ENCODE measurements at regions of chr1 and their contacts with region 1.

Region 1: DNA sequence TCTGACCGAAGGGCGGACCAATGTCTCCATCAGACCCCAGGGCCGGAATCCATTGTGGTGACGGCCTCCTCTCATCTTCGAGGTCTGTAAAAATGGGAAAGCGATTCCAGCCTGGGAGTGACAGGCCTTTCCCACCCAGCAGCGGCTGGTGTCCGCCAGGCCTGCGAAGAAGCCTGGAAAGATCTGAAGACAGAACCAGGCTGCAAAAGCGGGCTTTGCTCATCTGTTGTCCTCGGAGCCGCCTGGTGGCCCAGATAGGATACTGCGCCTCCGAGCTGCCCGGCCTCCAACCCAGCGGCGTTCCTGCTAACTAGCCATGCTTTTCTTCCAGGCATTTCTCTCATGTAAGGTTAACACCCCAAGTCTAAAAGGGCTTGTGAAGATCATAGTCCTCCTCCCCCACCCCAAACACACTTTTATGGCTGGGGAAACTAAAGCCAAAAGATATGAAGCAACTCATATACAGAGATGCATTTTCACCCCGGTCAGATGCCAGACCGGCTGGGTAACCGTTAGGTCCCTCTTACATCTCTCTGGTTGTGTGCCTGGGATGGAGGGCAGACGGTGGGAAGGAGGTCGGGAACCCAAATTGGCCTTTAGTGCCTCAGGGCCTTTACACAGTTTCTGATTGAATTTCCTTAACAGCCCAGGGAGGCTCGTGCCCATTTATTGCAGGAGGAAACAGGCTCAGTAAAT is 1.9 kb upstream of the DHRS3 start:
- DNase-seq: peak; percentile 70
- ATAC-seq: peak; percentile 36
- H3K4me3 ChIP-seq: peak overlapping the region; percentile 91 to 97 (median 94)
- H3K27ac ChIP-seq: peak overlapping the region; percentile 94
- H3K4me1 ChIP-seq: peaks cover 36% of the 10 kb centered on the region
- H3K27me3 ChIP-seq: peaks cover 0 to 3% of the 10 kb centered on the region in 2 experiments; a peak in 1 of 5 replicates
- CTCF ChIP-seq: peak; percentile 94
- EP300 ChIP-seq: no peak
- POLR2A ChIP-seq: no peak
- RAD21 ChIP-seq: peak; percentile 97

Region 2: DNA sequence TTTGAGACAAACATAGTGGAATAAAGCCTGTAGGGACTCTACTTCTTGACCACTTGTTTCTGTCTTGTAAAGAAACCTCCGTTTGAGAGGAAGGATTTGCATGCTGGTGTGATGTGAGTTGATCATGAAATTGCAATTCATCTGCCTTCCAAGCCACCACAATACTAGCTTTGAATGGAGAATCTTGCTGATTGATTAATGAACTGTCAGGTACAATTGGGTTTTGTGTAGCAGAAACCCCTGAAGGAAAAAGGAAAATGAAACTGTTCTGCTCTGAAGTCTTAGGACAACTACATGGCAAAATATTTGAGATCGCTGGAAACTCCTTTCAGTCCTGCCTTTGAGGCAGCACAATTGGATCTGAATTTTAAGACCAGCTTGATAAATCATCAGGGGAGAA is 299.4 kb before region 1 on chr1:
- CTCF ChIA-PET with region 1: interaction called, 17 read pairs
- POLR2A ChIA-PET with region 1: interaction called, 32 read pairs
- in situ Hi-C with region 1: loop called (anchors 10 kb)
- intact Hi-C with region 1: loop called (anchors 2 kb)
- DNase-seq: no peak
- ATAC-seq: no peak
- H3K4me3 ChIP-seq: no peak overlapping the region
- H3K27ac ChIP-seq: no peak overlapping the region
- H3K4me1 ChIP-seq: peaks cover 5% of the 10 kb centered on the region
- H3K27me3 ChIP-seq: no peaks in the 10 kb centered on the region
- CTCF ChIP-seq: no peak
- EP300 ChIP-seq: no peak
- POLR2A ChIP-seq: no peak
- RAD21 ChIP-seq: no peak

Region 3: GRCh38 chr1:12386130-12386529 is 233.8 kb before region 1 on chr1:
- CTCF ChIA-PET with region 1: no interaction called
- POLR2A ChIA-PET with region 1: interaction called, 188 read pairs
- in situ Hi-C with region 1: no loop called
- intact Hi-C with region 1: no loop called
- DNase-seq: peak; percentile 47
- ATAC-seq: no peak
- H3K4me3 ChIP-seq: no peak overlapping the region
- H3K27ac ChIP-seq: no peak overlapping the region
- H3K4me1 ChIP-seq: peaks cover 45% of the 10 kb centered on the region
- H3K27me3 ChIP-seq: no peaks in the 10 kb centered on the region
- CTCF ChIP-seq: no peak
- EP300 ChIP-seq: peak in 1 of 2 experiments; percentile 60; a peak in 1 of 4 replicates
- POLR2A ChIP-seq: no peak
- RAD21 ChIP-seq: no peak

Region 4: GRCh38 chr1:12528021-12528852 is 91.7 kb before region 1 on chr1:
- CTCF ChIA-PET with region 1: no interaction called
- POLR2A ChIA-PET with region 1: interaction called, 220 read pairs
- in situ Hi-C with region 1: loop called (anchors 5 kb)
- intact Hi-C with region 1: loop called (anchors 1 kb)
- DNase-seq: peak; percentile 98
- ATAC-seq: peak; percentile 90
- H3K4me3 ChIP-seq: peak overlapping the region in 1 of 3 experiments; percentile 45; a peak in 2 of 6 replicates
- H3K27ac ChIP-seq: peak overlapping the region; percentile 76
- H3K4me1 ChIP-seq: peaks cover 95% of the 10 kb centered on the region
- H3K27me3 ChIP-seq: no peaks in the 10 kb centered on the region
- CTCF ChIP-seq: peak; percentile 47
- EP300 ChIP-seq: peak; percentile 96 to 98
- POLR2A ChIP-seq: peak in 1 of 2 experiments; percentile 41; a peak in 2 of 4 replicates
- RAD21 ChIP-seq: peak; percentile 40; the same call in 1 of the 2 replicates

Region 5: GRCh38 chr1:12565966-12566352 is 54.0 kb before region 1 on chr1:
- CTCF ChIA-PET with region 1: no interaction called
- POLR2A ChIA-PET with region 1: interaction called, 20 read pairs
- in situ Hi-C with region 1: no loop called
- intact Hi-C with region 1: no loop called
- DNase-seq: no peak
- ATAC-seq: peak; percentile 8; the same call in 2 of the 3 replicates
- H3K4me3 ChIP-seq: no peak overlapping the region
- H3K27ac ChIP-seq: no peak overlapping the region
- H3K4me1 ChIP-seq: no peaks in the 10 kb centered on the region
- H3K27me3 ChIP-seq: no peaks in the 10 kb centered on the region
- CTCF ChIP-seq: no peak
- EP300 ChIP-seq: no peak
- POLR2A ChIP-seq: no peak
- RAD21 ChIP-seq: no peak

Region 6: GRCh38 chr1:12604114-12604874 is 15.6 kb before region 1 on chr1:
- CTCF ChIA-PET with region 1: interaction called, 56 read pairs
- POLR2A ChIA-PET with region 1: interaction called, 357 read pairs
- in situ Hi-C with region 1: no loop called
- intact Hi-C with region 1: loop called (anchors 1 kb)
- DNase-seq: peak; percentile 95
- ATAC-seq: peak; percentile 66
- H3K4me3 ChIP-seq: no peak overlapping the region
- H3K27ac ChIP-seq: no peak overlapping the region
- H3K4me1 ChIP-seq: peaks cover 96% of the 10 kb centered on the region
- H3K27me3 ChIP-seq: no peaks in the 10 kb centered on the region
- CTCF ChIP-seq: no peak
- EP300 ChIP-seq: peak in 1 of 2 experiments; percentile 92; a peak in 2 of 4 replicates
- POLR2A ChIP-seq: peak in 1 of 2 experiments; percentile 45; a peak in 1 of 4 replicates
- RAD21 ChIP-seq: no peak

Region 7: DNA sequence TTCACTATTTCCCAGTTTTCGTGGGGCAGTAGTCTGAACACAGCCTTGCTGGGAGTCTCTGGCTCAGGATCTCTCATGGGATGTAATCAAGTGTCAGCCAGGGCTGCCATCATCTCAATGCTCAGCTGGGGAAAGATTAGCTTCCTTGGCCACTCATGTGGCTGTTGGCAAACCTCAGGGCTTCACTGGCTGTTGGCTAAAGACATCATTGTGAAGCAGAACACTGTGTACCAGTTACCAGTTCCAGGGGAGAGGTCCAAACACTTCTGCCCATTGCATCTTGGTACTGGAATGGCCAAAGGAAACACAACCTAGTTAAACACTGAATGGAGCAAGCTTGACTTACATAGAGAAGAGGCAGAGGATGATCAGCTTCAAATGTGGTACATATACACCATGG is 57.6 kb after region 1 on chr1:
- CTCF ChIA-PET with region 1: no interaction called
- POLR2A ChIA-PET with region 1: no interaction called
- in situ Hi-C with region 1: no loop called
- intact Hi-C with region 1: no loop called
- DNase-seq: no peak
- ATAC-seq: no peak
- H3K4me3 ChIP-seq: no peak overlapping the region
- H3K27ac ChIP-seq: no peak overlapping the region
- H3K4me1 ChIP-seq: no peaks in the 10 kb centered on the region
- H3K27me3 ChIP-seq: peaks cover 2 to 12% of the 10 kb centered on the region in 2 experiments; a peak in 2 of 5 replicates
- CTCF ChIP-seq: no peak
- EP300 ChIP-seq: no peak
- POLR2A ChIP-seq: no peak
- RAD21 ChIP-seq: no peak

Measured in HepG2 (cell line).